Activated B cell treated with CpG ODN at 0.5 μM for 24 hours (primary cell): ENCODE measurements at regions of chr6 and their contacts with region 1.

Region 1: DNA sequence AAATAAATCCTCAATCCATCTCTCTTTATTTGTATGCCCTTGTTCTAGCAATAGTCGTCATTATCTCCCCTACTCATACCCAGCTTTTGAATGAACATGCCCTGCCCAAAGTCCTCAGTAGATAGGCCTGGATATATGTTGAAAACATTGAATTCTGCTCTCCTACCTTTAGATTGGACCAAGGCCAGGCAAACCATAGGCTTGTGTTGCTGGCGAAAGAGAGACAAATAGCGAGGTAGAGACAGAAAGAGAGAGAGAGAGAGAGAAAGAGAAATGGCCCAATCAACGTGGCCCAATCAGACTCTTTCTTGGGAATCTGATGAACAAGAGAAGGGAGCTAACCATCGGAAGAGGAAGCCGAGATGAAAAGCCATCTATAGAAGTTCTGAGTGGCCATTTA is 45.2 kb downstream of the NEDD9 start:
- DNase-seq: no peak
- ATAC-seq: no peak
- H3K4me3 Mint-ChIP-seq: no peak overlapping the region
- H3K27ac Mint-ChIP-seq: no peak overlapping the region
- H3K4me1 Mint-ChIP-seq: no peaks in the 10 kb centered on the region
- H3K27me3 Mint-ChIP-seq: no peaks in the 10 kb centered on the region
- CTCF ChIP-seq: no peak

Region 2: GRCh38 chr6:9543646-9544045 is 1643.7 kb before region 1 on chr6:
- CTCF ChIA-PET with region 1: no interaction called
- POLR2A ChIA-PET with region 1: no interaction called
- intact Hi-C with region 1: no loop called
- DNase-seq: no peak
- ATAC-seq: no peak
- H3K4me3 Mint-ChIP-seq: no peak overlapping the region
- H3K27ac Mint-ChIP-seq: no peak overlapping the region
- H3K4me1 Mint-ChIP-seq: no peaks in the 10 kb centered on the region
- H3K27me3 Mint-ChIP-seq: no peaks in the 10 kb centered on the region
- CTCF ChIP-seq: no peak

Region 3: GRCh38 chr6:11161031-11161966 is 26.0 kb before region 1 on chr6:
- CTCF ChIA-PET with region 1: no interaction called
- POLR2A ChIA-PET with region 1: no interaction called
- intact Hi-C with region 1: no loop called
- DNase-seq: no peak
- ATAC-seq: no peak
- H3K4me3 Mint-ChIP-seq: no peak overlapping the region
- H3K27ac Mint-ChIP-seq: no peak overlapping the region
- H3K4me1 Mint-ChIP-seq: no peaks in the 10 kb centered on the region
- H3K27me3 Mint-ChIP-seq: no peaks in the 10 kb centered on the region
- CTCF ChIP-seq: no peak

Region 4: DNA sequence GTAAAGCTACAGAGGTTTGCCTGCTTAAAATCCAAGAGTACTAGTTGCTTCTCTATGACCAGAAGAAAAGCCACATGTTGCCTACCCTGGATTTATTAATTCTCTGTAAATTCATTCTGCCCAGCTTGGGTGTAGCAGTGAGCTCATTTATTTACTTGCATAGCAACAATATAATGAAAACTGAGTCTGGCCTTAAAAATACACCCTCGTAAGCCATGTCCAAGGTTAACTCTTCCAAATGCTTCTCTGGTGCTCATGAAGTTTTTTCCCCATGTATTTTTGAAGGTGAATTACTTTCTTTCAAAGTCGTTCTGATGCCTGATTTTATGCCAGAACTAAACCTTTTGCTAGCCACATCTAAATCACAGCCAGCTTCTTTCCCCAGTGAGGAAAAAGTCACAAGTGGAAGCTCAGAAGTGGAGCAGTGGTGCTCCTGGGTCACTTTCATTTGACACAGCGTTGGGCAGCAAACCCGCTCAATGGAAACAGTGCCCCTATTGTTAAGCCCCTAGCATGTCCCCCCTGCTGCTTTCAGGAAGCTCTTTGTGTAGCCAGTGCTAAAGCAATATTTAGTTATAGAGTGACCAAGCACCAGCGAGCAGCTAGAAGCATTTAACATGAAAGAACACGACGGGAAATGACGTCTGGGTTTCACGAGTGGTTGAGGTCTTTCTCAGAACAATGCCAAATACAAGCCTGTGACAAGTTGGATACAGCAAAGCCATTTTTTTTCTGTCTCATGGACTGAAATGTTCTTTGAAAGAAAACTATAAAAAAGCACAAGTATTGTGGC is 15.4 kb after region 1 on chr6:
- CTCF ChIA-PET with region 1: no interaction called
- POLR2A ChIA-PET with region 1: no interaction called
- intact Hi-C with region 1: loop called (anchors 2 kb)
- DNase-seq: no peak
- ATAC-seq: no peak
- H3K4me3 Mint-ChIP-seq: no peak overlapping the region
- H3K27ac Mint-ChIP-seq: no peak overlapping the region
- H3K4me1 Mint-ChIP-seq: peaks cover 25% of the 10 kb centered on the region
- H3K27me3 Mint-ChIP-seq: no peaks in the 10 kb centered on the region
- CTCF ChIP-seq: no peak